ENCODE measurements at regions of chr3 and their contacts with region 1.

Region 1: GRCh38 chr3:44624749-44625480 is at the start of gene ZNF197:
- DNase-seq: peak; percentile 66
- H3K4me3 ChIP-seq: peak within 1 kb of the TSS; percentile 72
- H3K27ac ChIP-seq: peak within 1 kb of the TSS; percentile 4
- H3K4me1 ChIP-seq: peaks cover 7% of the 10 kb centered on the region
- CTCF ChIP-seq: no peak
- total RNA-seq, gene ZNF197: 2.8 and 4.4 TPM in 2 replicates

Region 2: DNA sequence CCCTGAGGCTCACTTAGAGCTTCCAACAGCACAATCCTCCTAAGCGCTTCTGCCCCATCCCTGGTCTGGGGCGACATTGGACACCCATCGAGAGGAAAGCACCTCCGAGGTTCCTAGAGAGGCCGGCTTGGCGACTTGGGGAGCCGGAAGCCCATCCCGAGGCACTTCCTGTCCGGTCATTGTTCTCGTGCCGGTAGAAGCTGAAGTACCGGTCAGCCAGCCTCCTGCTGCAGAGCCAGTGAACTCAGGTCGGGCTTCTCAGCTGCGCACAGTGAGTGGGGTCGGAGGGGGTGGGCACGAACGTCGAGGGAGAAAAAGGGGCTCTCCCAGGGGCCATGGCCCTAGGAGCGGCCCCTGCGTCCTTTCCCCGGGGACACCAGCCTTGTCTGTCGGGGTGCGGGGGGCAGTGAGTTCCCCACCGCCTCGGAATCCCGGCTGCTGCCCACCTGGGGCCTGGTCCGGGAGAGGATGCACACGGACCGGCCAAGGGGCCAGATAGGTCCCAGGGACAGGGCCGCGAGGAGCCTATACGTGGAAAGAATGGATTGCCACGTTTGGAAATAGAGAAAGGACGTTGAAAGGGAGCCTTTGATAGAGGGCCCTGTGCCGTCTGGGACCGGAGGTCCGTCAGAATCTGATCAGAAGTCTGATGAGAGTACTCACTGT is 23.8 kb after region 1 on chr3 and contains the start of gene ZNF35:
- CTCF ChIA-PET with region 1: no interaction called
- POLR2A ChIA-PET with region 1: interaction called, 5 read pairs
- intact Hi-C with region 1: loop called (anchors 2 kb)
- DNase-seq: peak; percentile 86
- H3K4me3 ChIP-seq: peak within 1 kb of the TSS; percentile 89
- H3K27ac ChIP-seq: no peak within 1 kb of the TSS
- H3K4me1 ChIP-seq: peaks cover 23% of the 10 kb centered on the region
- CTCF ChIP-seq: no peak
- total RNA-seq, gene ZNF35: 9.0 and 11.9 TPM in 2 replicates

Region 3: DNA sequence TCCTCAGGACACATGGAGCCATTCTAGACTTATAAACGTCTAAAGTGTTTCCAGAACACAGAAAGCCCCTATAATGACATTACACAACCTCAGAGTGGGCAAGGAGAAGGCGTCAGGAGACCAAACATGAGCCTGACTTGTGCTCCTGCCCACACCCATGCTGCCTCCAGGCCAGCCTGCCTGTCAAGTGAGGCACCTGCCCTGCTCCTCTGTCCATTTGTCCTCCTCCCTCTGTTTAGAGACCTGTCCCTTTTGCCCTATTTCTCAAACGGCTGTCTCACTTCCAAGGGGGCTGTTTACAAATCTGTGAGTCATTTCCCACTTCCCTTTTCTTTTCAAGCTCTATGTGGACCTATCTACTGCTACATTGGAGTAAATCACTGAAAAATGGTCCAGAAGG is 330.0 kb after region 1 on chr3:
- CTCF ChIA-PET with region 1: no interaction called
- POLR2A ChIA-PET with region 1: no interaction called
- intact Hi-C with region 1: no loop called
- DNase-seq: peak; percentile 47
- H3K4me3 ChIP-seq: no peak overlapping the region
- H3K27ac ChIP-seq: peak overlapping the region; percentile 23
- H3K4me1 ChIP-seq: peaks cover 50% of the 10 kb centered on the region
- CTCF ChIP-seq: no peak

Measured in OCI-LY7 (cell line).